Astrocyte of the spinal cord (primary cell): ENCODE measurements at regions of chr11 and their contacts with region 1.

Region 1: GRCh38 chr11:73597956-73598718 is at the start of gene FAM168A:
- DNase-seq: peak; percentile 98
- H3K4me3 ChIP-seq: peak within 1 kb of the TSS; percentile 64
- CTCF ChIP-seq: no peak

Region 2: DNA sequence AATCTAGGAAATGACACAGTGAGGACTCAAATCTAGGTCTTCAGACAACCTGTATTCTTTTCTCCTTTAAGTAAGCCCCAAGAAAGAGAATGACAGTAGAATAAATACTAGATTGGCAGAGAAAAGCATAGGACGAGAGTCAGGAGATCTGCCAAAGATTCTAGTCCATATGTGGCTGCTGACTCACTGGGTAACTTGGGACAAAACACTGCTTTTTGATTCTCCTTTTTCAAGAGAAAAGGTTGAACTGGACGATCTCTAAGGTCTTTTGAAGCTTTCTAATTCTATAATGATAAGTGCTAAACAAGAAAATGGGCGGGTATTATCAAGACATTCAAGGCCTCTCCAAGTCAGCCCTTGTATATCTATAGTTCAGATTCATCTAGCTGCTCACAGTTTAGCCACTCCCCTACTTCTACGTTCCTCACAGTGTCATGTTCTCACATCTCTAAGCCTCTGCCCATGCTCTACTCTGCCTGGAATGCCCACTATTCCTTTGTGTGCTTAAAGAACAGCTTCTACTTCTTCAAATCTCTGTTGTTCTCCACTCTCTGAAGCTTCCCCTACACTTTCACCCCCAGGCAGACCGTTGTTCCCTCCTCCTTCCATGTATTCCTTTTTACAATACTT is 168.9 kb before region 1 on chr11:
- in situ Hi-C with region 1: loop called (anchors 10 kb)
- DNase-seq: peak; percentile 76
- H3K4me3 ChIP-seq: no peak overlapping the region
- CTCF ChIP-seq: no peak